CD4-positive, alpha-beta memory T cell (primary cell): ENCODE measurements at regions of chr10 and their contacts with region 1.

Region 1: GRCh38 chr10:98170249-98171117 is 36.0 kb downstream of the R3HCC1L start:
- DNase-seq: peak in 4 of 5 donors; percentile 10 to 27 (median 14)
- H3K4me3 ChIP-seq: no peak overlapping the region
- H3K4me3 Mint-ChIP-seq: no peak overlapping the region
- H3K27ac ChIP-seq: no peak overlapping the region
- H3K27ac Mint-ChIP-seq: no peak overlapping the region
- H3K4me1 ChIP-seq: peaks cover 4% of the 10 kb centered on the region
- H3K4me1 Mint-ChIP-seq: peaks cover 28 to 48% (median 34%) of the 10 kb centered on the region in 4 donors
- H3K27me3 ChIP-seq: no peaks in the 10 kb centered on the region
- H3K27me3 Mint-ChIP-seq: no peaks in the 10 kb centered on the region

Region 2: GRCh38 chr10:98186681-98187080 is 16.2 kb after region 1 on chr10:
- CTCF ChIA-PET with region 1: interaction called, 14 read pairs
- POLR2A ChIA-PET with region 1: no interaction called
- intact Hi-C with region 1: no loop called
- DNase-seq: no peak
- H3K4me3 ChIP-seq: no peak overlapping the region
- H3K4me3 Mint-ChIP-seq: no peak overlapping the region
- H3K27ac ChIP-seq: no peak overlapping the region
- H3K27ac Mint-ChIP-seq: no peak overlapping the region
- H3K4me1 ChIP-seq: peaks cover 9% of the 10 kb centered on the region
- H3K4me1 Mint-ChIP-seq: peaks cover 26 to 33% (median 31%) of the 10 kb centered on the region in 4 donors
- H3K27me3 ChIP-seq: no peaks in the 10 kb centered on the region
- H3K27me3 Mint-ChIP-seq: no peaks in the 10 kb centered on the region

Region 3: GRCh38 chr10:98309366-98310355 is 139.2 kb after region 1 on chr10:
- CTCF ChIA-PET with region 1: interaction called, 6 read pairs
- POLR2A ChIA-PET with region 1: no interaction called
- intact Hi-C with region 1: loop called (anchors 5 kb)
- DNase-seq: no peak
- H3K4me3 ChIP-seq: no peak overlapping the region
- H3K4me3 Mint-ChIP-seq: peak overlapping the region in 1 of 8 donors; percentile 20
- H3K27ac ChIP-seq: no peak overlapping the region
- H3K27ac Mint-ChIP-seq: peak overlapping the region in 1 of 7 donors; percentile 72
- H3K4me1 ChIP-seq: no peaks in the 10 kb centered on the region
- H3K4me1 Mint-ChIP-seq: peaks cover 0 to 9% (median 3%) of the 10 kb centered on the region in 4 donors
- H3K27me3 ChIP-seq: no peaks in the 10 kb centered on the region
- H3K27me3 Mint-ChIP-seq: peaks cover 21 to 31% of the 10 kb centered on the region in 2 donors

Region 4: GRCh38 chr10:98929705-98930104 is 759.2 kb after region 1 on chr10:
- CTCF ChIA-PET with region 1: no interaction called
- POLR2A ChIA-PET with region 1: no interaction called
- intact Hi-C with region 1: no loop called
- DNase-seq: no peak
- H3K4me3 ChIP-seq: no peak overlapping the region
- H3K4me3 Mint-ChIP-seq: no peak overlapping the region
- H3K27ac ChIP-seq: no peak overlapping the region
- H3K27ac Mint-ChIP-seq: no peak overlapping the region
- H3K4me1 ChIP-seq: no peaks in the 10 kb centered on the region
- H3K4me1 Mint-ChIP-seq: no peaks in the 10 kb centered on the region
- H3K27me3 ChIP-seq: no peaks in the 10 kb centered on the region
- H3K27me3 Mint-ChIP-seq: no peaks in the 10 kb centered on the region